A549 (cell line): ENCODE measurements at regions of chr17 and their contacts with region 1.

Region 1: GRCh38 chr17:48543107-48543853 is 1.6 kb downstream of the HOXB2 start:
- DNase-seq: peak; percentile 75 to 79
- ATAC-seq: peak; percentile 89 to 92
- H3K4me3 ChIP-seq: peak overlapping the region; percentile 44
- H3K27ac ChIP-seq: peak overlapping the region; percentile 70 to 89
- H3K4me1 ChIP-seq: peaks cover 15% of the 10 kb centered on the region; the same call in 2 of the 3 replicates
- CTCF ChIP-seq: no peak
- EP300 ChIP-seq: no peak
- POLR2A ChIP-seq: peak; percentile 43
- RAD21 ChIP-seq: no peak

Region 2: GRCh38 chr17:48555258-48556228 is 12.3 kb after region 1 on chr17:
- CTCF ChIA-PET with region 1: interaction called, 5 read pairs
- POLR2A ChIA-PET with region 1: interaction called, 10 read pairs
- DNase-seq: peak; percentile 83 to 93
- ATAC-seq: peak; percentile 72 to 75
- H3K4me3 ChIP-seq: peak overlapping the region; percentile 60
- H3K27ac ChIP-seq: peak overlapping the region; percentile 97
- H3K4me1 ChIP-seq: peaks cover 31% of the 10 kb centered on the region
- CTCF ChIP-seq: no peak
- EP300 ChIP-seq: no peak
- POLR2A ChIP-seq: no peak; the same call in 1 of the 2 replicates
- RAD21 ChIP-seq: no peak; a peak in 1 of 5 replicates